MCF 10A (cell line): ENCODE measurements at regions of chr2 and their contacts with region 1.

Region 1: DNA sequence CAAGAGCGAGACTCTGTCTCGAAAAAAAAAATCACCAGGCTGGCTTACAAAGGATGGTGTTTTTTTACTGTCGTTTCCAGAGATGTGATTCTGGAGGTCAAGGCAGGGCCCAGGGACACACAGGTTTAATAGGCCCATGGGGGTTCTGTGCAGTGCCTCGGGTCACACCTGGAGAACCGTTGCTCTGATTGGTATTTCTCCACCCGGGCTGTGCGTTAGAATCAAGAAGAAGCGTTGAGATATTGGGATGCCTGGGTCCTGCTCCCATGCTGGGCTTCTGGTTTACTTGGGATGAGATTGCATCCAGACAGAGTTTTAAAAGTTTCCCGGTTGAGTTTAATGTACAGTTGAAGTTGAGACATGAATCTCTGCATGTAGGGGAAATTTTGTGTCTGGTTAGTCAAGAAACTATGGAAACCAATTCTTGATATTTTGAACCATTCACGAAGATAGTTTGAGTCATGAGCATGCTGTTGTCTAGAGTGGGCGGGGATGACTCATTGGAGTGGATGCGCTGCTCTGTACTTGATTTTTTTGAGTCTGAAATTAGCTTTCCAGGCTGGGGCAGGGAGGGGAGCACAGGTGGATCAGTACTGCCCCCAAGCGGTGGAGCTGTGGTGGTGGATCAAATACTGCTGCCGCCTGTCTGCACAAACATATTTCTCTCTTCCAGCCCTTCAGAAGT is 50.1 kb downstream of the GREB1 start:
- DNase-seq: peak; percentile 93
- H3K4me3 Mint-ChIP-seq: no peak overlapping the region
- H3K27ac Mint-ChIP-seq: no peak overlapping the region
- H3K4me1 Mint-ChIP-seq: peaks cover 7% of the 10 kb centered on the region
- H3K27me3 Mint-ChIP-seq: peaks cover 9% of the 10 kb centered on the region
- CTCF ChIP-seq: peak; percentile 91

Region 2: GRCh38 chr2:10832203-10832936 is 751.6 kb before region 1 on chr2:
- CTCF ChIA-PET with region 1: interaction called, 6 read pairs
- POLR2A ChIA-PET with region 1: no interaction called
- intact Hi-C with region 1: loop called (anchors 5 kb)
- DNase-seq: peak; percentile 76
- H3K4me3 Mint-ChIP-seq: no peak overlapping the region
- H3K27ac Mint-ChIP-seq: no peak overlapping the region
- H3K4me1 Mint-ChIP-seq: no peaks in the 10 kb centered on the region
- H3K27me3 Mint-ChIP-seq: peaks cover 45% of the 10 kb centered on the region
- CTCF ChIP-seq: peak; percentile 97

Region 3: GRCh38 chr2:11465497-11466406 is 118.2 kb before region 1 on chr2 and contains the start of gene E2F6:
- CTCF ChIA-PET with region 1: interaction called, 50 read pairs
- POLR2A ChIA-PET with region 1: interaction called, 5 read pairs
- intact Hi-C with region 1: no loop called
- DNase-seq: peak; percentile 94
- H3K4me3 Mint-ChIP-seq: peak within 1 kb of the TSS; percentile 93
- H3K27ac Mint-ChIP-seq: peak within 1 kb of the TSS; percentile 87
- H3K4me1 Mint-ChIP-seq: peaks cover 15% of the 10 kb centered on the region
- H3K27me3 Mint-ChIP-seq: no peaks in the 10 kb centered on the region
- CTCF ChIP-seq: no peak
- total RNA-seq, gene E2F6: 16.1 and 16.6 TPM in 2 replicates

Region 4: GRCh38 chr2:11498543-11499080 is 85.4 kb before region 1 on chr2:
- CTCF ChIA-PET with region 1: interaction called, 21 read pairs
- POLR2A ChIA-PET with region 1: interaction called, 3 read pairs
- intact Hi-C with region 1: no loop called
- DNase-seq: peak; percentile 32
- H3K4me3 Mint-ChIP-seq: no peak overlapping the region
- H3K27ac Mint-ChIP-seq: peak overlapping the region; percentile 9
- H3K4me1 Mint-ChIP-seq: peaks cover 11% of the 10 kb centered on the region
- H3K27me3 Mint-ChIP-seq: no peaks in the 10 kb centered on the region
- CTCF ChIP-seq: no peak

Region 5: DNA sequence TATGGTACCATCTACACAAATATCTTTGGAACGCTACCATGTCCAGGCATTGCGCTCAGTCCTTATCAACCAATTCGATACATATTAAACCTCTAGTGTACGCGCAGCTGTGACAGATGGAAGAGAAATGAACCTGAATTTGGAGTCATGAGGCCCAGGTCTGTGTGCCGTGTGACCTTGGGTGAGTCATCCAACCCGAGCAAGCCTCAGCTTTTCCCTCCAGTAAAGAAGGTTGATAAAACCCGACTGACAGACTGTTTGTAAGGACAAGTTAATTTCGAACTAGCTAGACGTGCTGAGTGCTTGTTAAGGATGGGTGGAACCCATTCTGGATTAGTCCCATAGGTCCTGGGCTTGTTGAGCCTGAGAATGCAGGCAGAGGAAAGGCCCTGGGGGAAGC is 22.0 kb before region 1 on chr2:
- CTCF ChIA-PET with region 1: interaction called, 18 read pairs
- POLR2A ChIA-PET with region 1: no interaction called
- intact Hi-C with region 1: no loop called
- DNase-seq: no peak
- H3K4me3 Mint-ChIP-seq: no peak overlapping the region
- H3K27ac Mint-ChIP-seq: no peak overlapping the region
- H3K4me1 Mint-ChIP-seq: peaks cover 5% of the 10 kb centered on the region
- H3K27me3 Mint-ChIP-seq: peaks cover 12% of the 10 kb centered on the region
- CTCF ChIP-seq: no peak

Region 6: DNA sequence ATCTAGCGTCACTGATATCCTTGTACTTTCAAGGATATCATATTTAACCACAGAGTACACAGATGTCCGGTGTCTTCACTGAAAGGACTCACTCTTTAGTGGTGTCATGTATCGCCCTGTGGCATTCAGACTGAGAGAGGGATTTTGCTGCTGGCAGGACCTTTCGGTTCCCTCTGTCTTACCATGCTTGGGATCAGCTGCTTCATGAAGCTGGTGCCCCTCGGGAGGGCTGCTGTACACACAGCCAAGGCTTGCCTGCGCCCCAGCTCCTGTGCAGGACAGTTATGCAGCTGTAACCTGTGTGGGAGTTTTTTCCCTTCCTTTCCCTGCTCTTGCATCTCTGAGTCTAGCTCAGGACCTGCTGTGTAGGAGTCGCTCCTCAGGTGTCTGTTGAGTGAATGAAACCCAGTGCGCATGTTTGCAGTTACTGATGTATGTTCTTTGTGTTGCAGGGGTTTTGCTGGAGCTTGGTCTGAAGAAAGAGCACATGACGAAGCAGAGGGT is 14.3 kb after region 1 on chr2:
- CTCF ChIA-PET with region 1: interaction called, 35 read pairs
- POLR2A ChIA-PET with region 1: no interaction called
- intact Hi-C with region 1: no loop called
- DNase-seq: peak; percentile 30
- H3K4me3 Mint-ChIP-seq: no peak overlapping the region
- H3K27ac Mint-ChIP-seq: no peak overlapping the region
- H3K4me1 Mint-ChIP-seq: peaks cover 5% of the 10 kb centered on the region
- H3K27me3 Mint-ChIP-seq: peaks cover 13% of the 10 kb centered on the region
- CTCF ChIP-seq: no peak